ENCODE measurements at regions of chr6 and their contacts with region 1.

Region 1: GRCh38 chr6:16136621-16137450 is 8.0 kb downstream of the MYLIP start:
- DNase-seq: peak; percentile 87
- ATAC-seq: peak; percentile 95
- H3K4me3 ChIP-seq: peak overlapping the region; percentile 48
- H3K27ac ChIP-seq: peak overlapping the region; percentile 68
- H3K4me1 ChIP-seq: peaks cover 54% of the 10 kb centered on the region
- H3K27me3 ChIP-seq: no peaks in the 10 kb centered on the region
- CTCF ChIP-seq: no peak

Region 2: GRCh38 chr6:15948930-15949900 is 187.6 kb before region 1 on chr6:
- CTCF ChIA-PET with region 1: no interaction called
- POLR2A ChIA-PET with region 1: no interaction called
- intact Hi-C with region 1: loop called (anchors 2 kb)
- DNase-seq: peak; percentile 84
- ATAC-seq: peak; percentile 89
- H3K4me3 ChIP-seq: peak overlapping the region; percentile 13; the same call in 1 of the 2 replicates
- H3K27ac ChIP-seq: peak overlapping the region; percentile 57
- H3K4me1 ChIP-seq: peaks cover 40% of the 10 kb centered on the region
- H3K27me3 ChIP-seq: no peaks in the 10 kb centered on the region
- CTCF ChIP-seq: no peak

Region 3: DNA sequence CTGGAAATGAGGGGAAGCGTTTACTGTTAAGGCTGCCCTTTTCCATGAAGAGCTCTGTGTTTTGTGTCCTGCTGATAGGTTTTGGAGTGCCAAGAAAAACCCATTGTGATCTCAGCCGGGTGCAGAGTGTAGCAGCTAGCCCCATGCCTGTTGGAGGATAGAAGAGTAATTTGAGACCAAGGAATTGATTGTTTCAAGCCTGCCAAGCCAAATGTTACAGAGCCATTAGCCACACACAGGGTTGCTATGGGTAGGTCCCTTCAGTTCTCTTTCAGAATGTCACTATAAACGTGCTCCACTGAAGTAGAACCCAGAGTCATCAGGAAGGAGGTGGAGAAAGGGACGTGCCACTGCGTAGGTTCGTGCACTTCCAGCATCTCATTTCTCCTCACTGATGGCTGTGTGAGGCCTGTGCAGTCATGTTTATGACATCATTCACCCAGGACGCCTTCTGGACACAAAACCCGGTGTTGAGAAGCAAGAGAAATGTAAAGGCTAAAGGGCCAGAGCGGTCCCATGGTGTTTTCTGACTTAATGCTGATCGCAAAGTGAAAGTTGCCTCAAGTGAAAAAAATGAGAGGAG is 108.1 kb after region 1 on chr6:
- CTCF ChIA-PET with region 1: no interaction called
- POLR2A ChIA-PET with region 1: no interaction called
- intact Hi-C with region 1: no loop called
- DNase-seq: no peak
- ATAC-seq: no peak
- H3K4me3 ChIP-seq: no peak overlapping the region
- H3K27ac ChIP-seq: no peak overlapping the region
- H3K4me1 ChIP-seq: peaks cover 21% of the 10 kb centered on the region
- H3K27me3 ChIP-seq: no peaks in the 10 kb centered on the region
- CTCF ChIP-seq: no peak